Common myeloid progenitor, CD34-positive (primary cell): ENCODE measurements at regions of chr3 and their contacts with region 1.

Region 1: DNA sequence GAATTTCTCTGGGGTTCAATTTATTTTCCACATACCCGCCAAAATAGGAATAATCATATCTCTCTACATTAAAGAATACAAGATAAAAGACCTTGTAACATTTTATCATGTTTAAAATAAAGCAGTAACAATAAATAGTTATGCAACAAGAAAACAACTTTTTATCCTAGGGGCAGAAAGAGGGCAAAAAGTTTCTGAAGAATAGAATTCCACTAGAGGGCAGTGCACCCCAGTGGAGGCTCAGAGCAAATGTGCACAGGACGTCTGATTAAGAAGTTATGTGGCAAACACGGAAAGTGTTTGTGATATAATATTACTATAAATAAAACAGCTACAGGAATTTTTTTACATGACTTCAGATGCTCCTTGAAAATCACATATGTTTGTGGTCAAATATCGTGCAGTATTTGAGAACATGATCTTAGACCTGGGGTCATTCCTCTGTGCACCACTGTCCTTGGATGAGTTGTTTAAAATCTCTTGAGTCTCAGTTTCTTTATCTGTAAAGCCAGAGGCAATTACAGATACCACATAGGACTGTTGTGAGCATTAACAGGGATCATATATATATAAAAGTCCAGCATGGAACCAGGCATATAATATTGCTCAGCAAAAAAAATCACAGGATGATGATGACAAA is 13.2 kb upstream of the PIK3R4 start:
- DNase-seq: peak; percentile 77 to 90 (median 86)
- H3K4me3 ChIP-seq: peak overlapping the region in 1 of 7 experiments; percentile 47
- H3K27ac ChIP-seq: no peak overlapping the region
- H3K4me1 ChIP-seq: peaks cover 0 to 11% (median 6%) of the 10 kb centered on the region in 4 experiments
- H3K27me3 ChIP-seq: no peaks in the 10 kb centered on the region

Region 2: GRCh38 chr3:130480736-130481135 is 279.1 kb before region 1 on chr3:
- CTCF ChIA-PET with region 1: no interaction called
- POLR2A ChIA-PET with region 1: no interaction called
- DNase-seq: peak; percentile 14 to 35 (median 27)
- H3K4me3 ChIP-seq: no peak overlapping the region
- H3K27ac ChIP-seq: no peak overlapping the region
- H3K4me1 ChIP-seq: no peaks in the 10 kb centered on the region
- H3K27me3 ChIP-seq: peaks cover 0 to 3% (median 0%) of the 10 kb centered on the region in 5 experiments

Region 3: DNA sequence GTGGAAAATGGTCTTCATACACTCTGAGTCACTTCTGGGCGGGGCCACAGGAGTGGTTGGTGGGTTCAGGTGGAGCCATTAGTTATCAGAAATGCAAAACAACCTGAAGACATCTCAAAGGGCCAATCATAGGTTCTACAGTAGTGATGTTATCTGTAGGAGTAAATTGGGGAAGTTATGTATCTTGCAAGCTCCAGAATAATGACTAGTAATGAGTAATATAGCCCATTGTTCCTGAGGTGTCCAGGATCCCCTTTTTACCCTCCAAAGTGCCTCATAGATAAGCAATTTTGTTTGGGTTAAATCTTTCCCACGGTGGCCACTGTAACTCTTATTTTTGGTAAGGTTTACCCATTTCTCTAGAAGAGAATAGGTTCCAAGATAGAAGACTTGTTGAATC is 104.9 kb before region 1 on chr3:
- CTCF ChIA-PET with region 1: no interaction called
- POLR2A ChIA-PET with region 1: no interaction called
- DNase-seq: peak in 2 of 3 donors; percentile 11 to 19
- H3K4me3 ChIP-seq: no peak overlapping the region
- H3K27ac ChIP-seq: no peak overlapping the region
- H3K4me1 ChIP-seq: no peaks in the 10 kb centered on the region
- H3K27me3 ChIP-seq: no peaks in the 10 kb centered on the region

Region 4: GRCh38 chr3:130773366-130773765 is 13.5 kb after region 1 on chr3:
- CTCF ChIA-PET with region 1: interaction called, 22 read pairs
- POLR2A ChIA-PET with region 1: no interaction called
- DNase-seq: peak in 1 of 3 donors; percentile 28
- H3K4me3 ChIP-seq: no peak overlapping the region
- H3K27ac ChIP-seq: no peak overlapping the region
- H3K4me1 ChIP-seq: peaks cover 0 to 21% (median 8%) of the 10 kb centered on the region in 4 experiments
- H3K27me3 ChIP-seq: no peaks in the 10 kb centered on the region

Region 5: DNA sequence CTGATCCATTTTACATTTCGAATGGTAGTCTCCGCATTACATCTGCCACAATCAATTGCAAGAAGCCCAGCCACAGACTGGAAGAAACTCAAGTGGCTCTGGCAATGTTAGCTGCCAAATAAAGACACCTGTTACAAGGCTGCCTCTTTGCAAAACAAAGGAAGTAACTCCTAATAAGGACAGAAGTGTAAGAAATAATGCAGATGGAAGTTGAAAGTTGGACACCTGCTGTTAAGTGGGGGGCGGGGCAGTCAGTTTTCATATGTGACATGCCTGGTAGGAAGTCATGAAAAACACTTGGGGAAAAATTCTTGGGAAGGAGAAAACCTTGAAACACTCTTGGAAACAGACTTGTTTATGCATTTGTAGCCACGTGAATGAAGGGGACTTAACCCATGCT is 80.0 kb after region 1 on chr3:
- CTCF ChIA-PET with region 1: interaction called, 11 read pairs
- POLR2A ChIA-PET with region 1: no interaction called
- DNase-seq: peak in 2 of 3 donors; percentile 67 to 79
- H3K4me3 ChIP-seq: peak overlapping the region in 3 of 7 experiments; percentile 28 to 56 (median 56)
- H3K27ac ChIP-seq: no peak overlapping the region
- H3K4me1 ChIP-seq: peaks cover 14 to 27% (median 19%) of the 10 kb centered on the region in 4 experiments
- H3K27me3 ChIP-seq: no peaks in the 10 kb centered on the region

Region 6: DNA sequence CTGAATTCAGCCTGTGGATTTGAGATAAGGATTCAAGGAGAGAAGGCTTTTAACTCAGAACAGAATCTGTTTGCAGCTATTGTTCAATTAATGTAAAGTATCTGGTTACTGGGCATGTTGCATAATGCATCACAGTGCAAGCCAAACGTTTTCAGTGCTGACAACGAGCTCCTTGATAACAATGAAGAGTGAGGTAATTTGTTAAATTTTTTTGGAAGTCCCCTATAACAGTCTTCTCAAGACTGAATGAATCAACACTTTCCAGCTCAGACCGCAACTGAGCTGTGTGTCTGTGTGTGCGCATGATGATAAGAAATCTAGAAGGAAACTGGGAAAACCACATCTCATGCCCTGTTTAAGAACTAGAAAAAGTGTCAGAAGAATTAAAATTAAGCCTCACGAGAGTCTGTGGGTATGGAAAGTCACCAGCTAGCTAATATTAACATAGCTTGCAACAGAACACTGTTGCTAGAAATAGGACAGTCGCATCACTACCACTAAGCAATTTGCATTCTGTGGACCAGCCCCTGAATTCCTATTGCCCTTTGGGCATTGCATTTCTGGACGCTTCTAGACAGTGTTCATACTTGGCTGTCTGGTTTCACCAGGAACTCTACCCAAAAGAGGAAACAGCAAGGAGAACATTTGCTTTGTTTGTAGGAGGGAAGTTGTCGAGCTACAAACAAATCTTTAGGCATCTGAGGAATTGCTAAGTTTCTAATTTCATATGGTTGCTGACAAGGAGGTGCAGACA is 90.4 kb after region 1 on chr3:
- CTCF ChIA-PET with region 1: interaction called, 47 read pairs
- POLR2A ChIA-PET with region 1: interaction called, 12 read pairs
- DNase-seq: peak; percentile 99 to 100 (median 99)
- H3K4me3 ChIP-seq: peak overlapping the region in 6 of 7 experiments; percentile 77 to 100 (median 91)
- H3K27ac ChIP-seq: peak overlapping the region; percentile 100
- H3K4me1 ChIP-seq: peaks cover 17 to 65% (median 45%) of the 10 kb centered on the region in 4 experiments
- H3K27me3 ChIP-seq: no peaks in the 10 kb centered on the region

Region 7: GRCh38 chr3:130857326-130858026 is 97.7 kb after region 1 on chr3:
- CTCF ChIA-PET with region 1: interaction called, 47 read pairs
- POLR2A ChIA-PET with region 1: no interaction called
- DNase-seq: peak; percentile 63 to 91 (median 86)
- H3K4me3 ChIP-seq: peak overlapping the region in 5 of 7 experiments; percentile 3 to 54 (median 9)
- H3K27ac ChIP-seq: peak overlapping the region; percentile 11 to 26
- H3K4me1 ChIP-seq: peaks cover 21 to 66% (median 50%) of the 10 kb centered on the region in 4 experiments
- H3K27me3 ChIP-seq: no peaks in the 10 kb centered on the region

Region 8: DNA sequence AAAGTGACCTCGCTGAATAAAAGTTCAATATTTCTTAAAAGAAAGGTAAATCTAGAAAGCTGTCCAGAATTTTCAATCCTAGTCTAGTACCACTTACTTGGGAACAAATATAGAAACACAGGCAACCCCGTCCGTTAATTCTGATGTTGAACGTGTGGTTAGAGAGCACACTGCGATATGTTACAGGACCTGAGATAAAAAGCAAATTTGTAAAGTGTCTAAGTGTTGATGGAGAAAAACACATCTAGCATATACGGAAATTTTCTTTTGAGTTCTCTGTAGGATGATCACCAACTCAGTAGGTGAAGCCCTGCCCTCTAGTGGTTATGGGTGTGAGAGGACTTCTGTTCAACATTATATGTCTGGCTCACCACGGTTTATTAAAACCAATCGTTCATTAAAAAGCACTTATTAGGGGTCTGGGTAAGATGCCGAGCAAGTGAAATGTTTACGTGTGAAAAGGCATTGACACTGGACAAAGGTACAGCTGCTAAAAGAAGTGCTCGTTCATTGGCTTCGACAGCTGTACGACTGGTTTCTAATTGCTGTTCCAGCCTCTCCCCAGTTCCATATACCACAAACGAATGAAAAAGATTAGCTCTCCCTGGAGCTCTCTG is 133.0 kb after region 1 on chr3:
- CTCF ChIA-PET with region 1: interaction called, 97 read pairs
- POLR2A ChIA-PET with region 1: interaction called, 5 read pairs
- DNase-seq: peak; percentile 85 to 92 (median 90)
- H3K4me3 ChIP-seq: peak overlapping the region; percentile 72 to 96 (median 86)
- H3K27ac ChIP-seq: peak overlapping the region; percentile 89 to 96
- H3K4me1 ChIP-seq: peaks cover 6 to 52% (median 26%) of the 10 kb centered on the region in 4 experiments
- H3K27me3 ChIP-seq: no peaks in the 10 kb centered on the region